A549 (cell line): ENCODE measurements at regions of chr19 and their contacts with region 1.

Region 1: GRCh38 chr19:29858000-29858596 is 46.3 kb downstream of the CCNE1 start:
- DNase-seq: peak; percentile 60 to 63
- ATAC-seq: peak; percentile 78 to 86
- H3K4me3 ChIP-seq: no peak overlapping the region
- H3K27ac ChIP-seq: no peak overlapping the region
- H3K4me1 ChIP-seq: no peaks in the 10 kb centered on the region
- CTCF ChIP-seq: peak; percentile 68
- EP300 ChIP-seq: no peak
- POLR2A ChIP-seq: no peak
- RAD21 ChIP-seq: peak; percentile 63

Region 2: GRCh38 chr19:29724102-29724641 is 133.9 kb before region 1 on chr19:
- CTCF ChIA-PET with region 1: interaction called, 12 read pairs
- POLR2A ChIA-PET with region 1: no interaction called
- DNase-seq: no peak
- ATAC-seq: no peak
- H3K4me3 ChIP-seq: no peak overlapping the region
- H3K27ac ChIP-seq: no peak overlapping the region
- H3K4me1 ChIP-seq: no peaks in the 10 kb centered on the region
- CTCF ChIP-seq: no peak
- EP300 ChIP-seq: no peak
- POLR2A ChIP-seq: no peak
- RAD21 ChIP-seq: no peak

Region 3: GRCh38 chr19:29831041-29831548 is 27.0 kb before region 1 on chr19:
- CTCF ChIA-PET with region 1: interaction called, 10 read pairs
- POLR2A ChIA-PET with region 1: no interaction called
- DNase-seq: peak in 1 of 2 experiments; percentile 71
- ATAC-seq: peak; percentile 70
- H3K4me3 ChIP-seq: no peak overlapping the region
- H3K27ac ChIP-seq: 0 out of 6 replicates have a peak overlapping the region, but pooled peaks of 1 of the 2 experiments have one; percentile 2
- H3K4me1 ChIP-seq: peaks cover 12% of the 10 kb centered on the region; the same call in 2 of the 3 replicates
- CTCF ChIP-seq: no peak
- EP300 ChIP-seq: no peak
- POLR2A ChIP-seq: no peak
- RAD21 ChIP-seq: no peak

Region 4: GRCh38 chr19:29844891-29845572 is 13.1 kb before region 1 on chr19:
- CTCF ChIA-PET with region 1: interaction called, 32 read pairs
- POLR2A ChIA-PET with region 1: interaction called, 11 read pairs
- DNase-seq: peak; percentile 92 to 99
- ATAC-seq: peak; percentile 78 to 88
- H3K4me3 ChIP-seq: peak overlapping the region; percentile 57
- H3K27ac ChIP-seq: peak overlapping the region; percentile 61 to 84
- H3K4me1 ChIP-seq: peaks cover 20% of the 10 kb centered on the region
- CTCF ChIP-seq: no peak
- EP300 ChIP-seq: no peak
- POLR2A ChIP-seq: peak; percentile 72
- RAD21 ChIP-seq: no peak

Region 5: DNA sequence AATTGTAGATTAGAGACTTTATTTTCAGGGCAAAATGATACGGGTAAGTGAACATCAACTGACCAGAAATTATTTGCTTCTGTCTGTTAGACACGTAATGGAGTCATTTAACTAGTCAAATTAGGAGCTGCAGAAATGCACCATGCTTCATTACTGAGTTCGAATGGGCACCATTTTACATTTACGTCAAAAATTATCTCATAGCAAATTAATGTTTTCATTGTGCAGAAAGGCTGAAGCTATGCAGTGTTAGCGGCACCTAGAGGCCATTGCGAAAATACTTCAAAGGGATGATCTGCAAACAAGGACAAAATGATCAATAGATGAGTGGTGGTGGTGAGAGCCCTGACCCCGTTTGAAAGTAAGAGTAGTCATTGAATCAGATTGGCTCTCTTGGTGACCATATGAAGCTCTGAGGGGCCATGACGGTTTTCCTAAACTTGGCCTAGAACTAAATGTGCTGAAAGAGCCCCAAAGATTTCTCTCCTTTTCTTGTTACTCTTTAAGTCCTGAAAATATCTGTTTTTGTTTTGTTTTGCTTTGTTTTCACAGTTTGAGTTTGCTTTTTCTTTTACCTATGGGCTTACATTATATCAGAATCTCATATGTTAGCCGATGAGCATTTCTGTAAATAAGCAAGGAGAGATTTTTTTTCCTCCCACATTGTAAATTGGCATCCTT is 792.0 kb after region 1 on chr19:
- CTCF ChIA-PET with region 1: interaction called, 21 read pairs
- POLR2A ChIA-PET with region 1: no interaction called
- DNase-seq: peak; percentile 72 to 87
- ATAC-seq: peak; percentile 50 to 85; a peak in 5 of 6 replicates
- H3K4me3 ChIP-seq: no peak overlapping the region
- H3K27ac ChIP-seq: no peak overlapping the region
- H3K4me1 ChIP-seq: no peaks in the 10 kb centered on the region
- CTCF ChIP-seq: peak; percentile 99
- EP300 ChIP-seq: no peak
- POLR2A ChIP-seq: no peak
- RAD21 ChIP-seq: peak; percentile 94 to 98